Activated T-helper 1 cell treated with anti-CD3 and anti-CD28 coated beads, Interleukin-12 subunit alpha, Interleukin-12 subunit beta, Interleukin-2, Interleukin-4 antibody, amounts not matched to agents 30 ng/mL and 10 ng/mL and 1 ng/mL, durations not matched to agents 14 hours and 24 hours and 36 hours (primary cell): ENCODE measurements at regions of chr6 and their contacts with region 1.

Region 1: DNA sequence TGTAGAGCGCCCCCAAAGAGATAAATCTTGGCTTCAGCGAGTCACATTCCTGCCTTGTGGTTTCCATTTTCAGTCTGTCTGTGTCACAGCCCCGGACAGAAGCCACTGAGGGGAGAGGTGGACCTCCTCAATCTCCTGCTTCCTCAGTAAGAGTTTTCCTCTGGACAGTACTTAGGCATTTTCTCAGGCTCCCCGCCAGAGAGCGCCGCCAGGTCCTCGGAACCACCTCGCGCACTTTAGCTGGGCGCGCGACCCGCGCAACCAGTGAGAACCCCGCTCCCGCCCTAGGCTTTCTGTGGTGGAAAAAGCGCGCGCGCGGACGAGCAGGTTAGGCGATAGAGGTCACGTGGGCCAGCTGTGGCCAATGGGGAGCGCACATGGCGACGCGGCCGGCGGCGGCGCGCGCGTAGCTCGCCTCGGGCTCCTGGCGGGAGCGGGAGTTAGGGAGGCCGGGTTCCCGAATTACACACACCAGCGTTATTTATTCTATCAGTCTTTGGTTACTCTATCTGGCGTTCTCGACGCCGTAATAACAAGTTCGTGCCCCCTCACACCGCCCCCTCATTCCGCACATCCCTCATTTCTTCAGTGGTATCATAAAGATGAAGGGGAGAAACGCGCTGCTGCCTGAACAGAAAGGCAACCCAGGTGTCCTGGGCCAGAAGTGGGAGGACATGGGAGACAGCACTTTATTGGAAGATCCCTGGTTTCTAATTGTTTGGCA is 19.4 kb downstream of the PXT1 start:
- DNase-seq: peak; percentile 97
- H3K4me3 Mint-ChIP-seq: peak overlapping the region; percentile 88
- H3K27ac Mint-ChIP-seq: peak overlapping the region; percentile 84
- H3K4me1 Mint-ChIP-seq: peaks cover 21% of the 10 kb centered on the region
- H3K27me3 Mint-ChIP-seq: peaks cover 11% of the 10 kb centered on the region

Region 2: GRCh38 chr6:35920793-35921732 is 502.2 kb before region 1 on chr6 and contains the start of gene SRPK1:
- intact Hi-C with region 1: loop called (anchors 1 kb)
- DNase-seq: peak; percentile 85
- H3K4me3 Mint-ChIP-seq: peak within 1 kb of the TSS; percentile 96
- H3K27ac Mint-ChIP-seq: peak within 1 kb of the TSS; percentile 93
- H3K4me1 Mint-ChIP-seq: peaks cover 49% of the 10 kb centered on the region
- H3K27me3 Mint-ChIP-seq: no peaks in the 10 kb centered on the region
- total RNA-seq, gene SRPK1: 149 and 182 TPM in 2 replicates

Region 3: GRCh38 chr6:36386495-36387439 is 36.5 kb before region 1 on chr6:
- intact Hi-C with region 1: loop called (anchors 2 kb)
- DNase-seq: no peak
- H3K4me3 Mint-ChIP-seq: peak overlapping the region; percentile 92
- H3K27ac Mint-ChIP-seq: peak overlapping the region; percentile 82
- H3K4me1 Mint-ChIP-seq: peaks cover 44% of the 10 kb centered on the region
- H3K27me3 Mint-ChIP-seq: peaks cover 31% of the 10 kb centered on the region

Region 4: DNA sequence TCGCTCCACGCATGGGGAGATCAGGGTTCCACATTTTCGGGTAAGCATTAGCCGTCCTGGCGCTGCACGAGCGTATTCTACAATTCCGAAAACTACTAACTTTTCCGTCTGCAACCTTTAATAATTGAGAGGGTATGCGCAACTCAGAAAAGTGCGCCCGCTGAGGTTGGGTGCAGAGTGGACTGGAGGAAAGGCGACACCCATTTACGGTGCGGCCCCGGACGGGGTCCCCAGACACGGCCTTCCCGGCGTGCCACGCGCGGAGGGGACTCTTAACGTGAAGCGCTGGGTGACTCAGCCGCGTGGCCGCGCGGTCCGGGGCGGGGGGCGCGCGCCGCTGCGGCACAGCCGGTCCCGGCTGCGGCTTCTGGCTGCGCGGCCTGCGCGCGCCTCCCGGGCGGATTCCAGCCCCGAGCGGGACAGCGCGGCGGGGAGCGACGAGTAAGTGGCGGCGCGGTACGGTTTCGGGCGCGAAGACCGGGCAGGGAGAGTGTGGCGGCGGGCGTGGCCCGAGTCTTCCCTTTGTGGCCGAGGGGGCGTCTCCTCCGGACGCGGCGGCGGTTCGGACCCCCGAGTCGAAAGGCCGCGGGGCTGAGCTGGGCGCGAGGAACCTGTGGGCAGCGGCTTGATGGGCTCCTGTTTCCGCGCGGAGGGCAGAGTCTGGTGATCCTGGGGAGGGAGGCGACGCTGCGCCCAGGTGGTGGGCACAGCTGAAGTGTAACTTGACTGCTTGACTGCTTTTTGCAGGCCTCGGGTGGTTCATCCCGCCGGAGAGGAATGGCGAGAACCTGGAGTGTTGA is 19.6 kb after region 1 on chr6 and contains the starts of genes KCTD20 and PXT1:
- intact Hi-C with region 1: loop called (anchors 1 kb)
- DNase-seq: peak; percentile 86
- H3K4me3 Mint-ChIP-seq: peak within 1 kb of the TSS; percentile 96
- H3K27ac Mint-ChIP-seq: peak within 1 kb of the TSS; percentile 95
- H3K4me1 Mint-ChIP-seq: peaks cover 48% of the 10 kb centered on the region
- H3K27me3 Mint-ChIP-seq: no peaks in the 10 kb centered on the region
- total RNA-seq, gene KCTD20: 62.4 and 62.8 TPM in 2 replicates
- total RNA-seq, gene PXT1: 0.16 and 0.29 TPM in 2 replicates

Region 5: DNA sequence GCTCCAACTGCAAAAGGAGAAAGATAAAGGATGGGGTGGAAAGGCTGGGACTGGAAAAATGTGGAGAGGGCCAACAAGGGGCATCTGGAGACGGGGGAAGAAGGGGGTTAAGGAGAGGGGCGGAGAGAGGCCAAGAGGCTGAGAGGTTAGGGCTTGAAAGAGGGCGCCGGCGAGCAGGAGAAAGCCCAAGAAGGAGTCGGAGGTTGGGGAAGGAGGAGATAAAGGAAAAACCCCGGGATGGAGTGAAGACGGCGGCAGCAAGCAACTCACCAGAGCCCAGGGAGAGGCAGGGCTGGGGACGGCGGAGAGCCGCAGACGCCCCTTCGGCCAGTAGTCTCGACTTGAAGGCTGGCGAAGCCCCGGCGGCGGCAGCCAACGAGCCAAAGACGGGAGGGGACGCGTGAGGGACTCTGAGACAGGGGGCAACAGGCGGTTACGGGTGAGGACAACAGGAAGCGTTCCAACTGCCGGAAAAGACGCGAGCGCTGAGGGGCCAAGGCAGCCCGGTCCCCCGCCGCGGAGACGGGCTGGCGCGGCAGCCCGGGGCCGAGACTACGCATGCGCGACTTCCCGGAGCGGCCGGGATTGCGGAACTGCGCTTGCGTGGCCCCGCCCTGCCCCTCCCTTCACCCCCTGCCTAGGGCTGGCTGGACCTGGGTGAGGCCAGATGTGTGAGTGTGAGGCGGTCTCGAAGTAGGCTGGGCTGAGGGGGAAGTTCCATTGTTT is 123.8 kb after region 1 on chr6 and contains the start of gene STK38:
- intact Hi-C with region 1: loop called (anchors 1 kb)
- DNase-seq: peak; percentile 84
- H3K4me3 Mint-ChIP-seq: peak within 1 kb of the TSS; percentile 95
- H3K27ac Mint-ChIP-seq: peak within 1 kb of the TSS; percentile 92
- H3K4me1 Mint-ChIP-seq: peaks cover 50% of the 10 kb centered on the region
- H3K27me3 Mint-ChIP-seq: peaks cover 2% of the 10 kb centered on the region
- total RNA-seq, gene STK38: 23.5 and 23.6 TPM in 2 replicates

Region 6: GRCh38 chr6:36594029-36594815 is 171.0 kb after region 1 on chr6 and contains the start of gene SRSF3:
- intact Hi-C with region 1: loop called (anchors 1 kb)
- DNase-seq: peak; percentile 96
- H3K4me3 Mint-ChIP-seq: peak within 1 kb of the TSS; percentile 97
- H3K27ac Mint-ChIP-seq: peak within 1 kb of the TSS; percentile 100
- H3K4me1 Mint-ChIP-seq: peaks cover 44% of the 10 kb centered on the region
- H3K27me3 Mint-ChIP-seq: no peaks in the 10 kb centered on the region
- total RNA-seq, gene SRSF3: 525 and 546 TPM in 2 replicates

Region 7: DNA sequence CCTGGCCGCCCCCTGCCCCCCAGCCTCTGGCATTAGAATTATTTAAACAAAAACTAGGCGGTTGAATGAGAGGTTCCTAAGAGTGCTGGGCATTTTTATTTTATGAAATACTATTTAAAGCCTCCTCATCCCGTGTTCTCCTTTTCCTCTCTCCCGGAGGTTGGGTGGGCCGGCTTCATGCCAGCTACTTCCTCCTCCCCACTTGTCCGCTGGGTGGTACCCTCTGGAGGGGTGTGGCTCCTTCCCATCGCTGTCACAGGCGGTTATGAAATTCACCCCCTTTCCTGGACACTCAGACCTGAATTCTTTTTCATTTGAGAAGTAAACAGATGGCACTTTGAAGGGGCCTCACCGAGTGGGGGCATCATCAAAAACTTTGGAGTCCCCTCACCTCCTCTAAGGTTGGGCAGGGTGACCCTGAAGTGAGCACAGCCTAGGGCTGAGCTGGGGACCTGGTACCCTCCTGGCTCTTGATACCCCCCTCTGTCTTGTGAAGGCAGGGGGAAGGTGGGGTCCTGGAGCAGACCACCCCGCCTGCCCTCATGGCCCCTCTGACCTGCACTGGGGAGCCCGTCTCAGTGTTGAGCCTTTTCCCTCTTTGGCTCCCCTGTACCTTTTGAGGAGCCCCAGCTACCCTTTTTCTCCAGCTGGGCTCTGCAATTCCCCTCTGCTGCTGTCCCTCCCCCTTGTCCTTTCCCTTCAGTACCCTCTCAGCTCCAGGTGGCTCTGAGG is 262.8 kb after region 1 on chr6:
- intact Hi-C with region 1: no loop called
- DNase-seq: no peak
- H3K4me3 Mint-ChIP-seq: no peak overlapping the region
- H3K27ac Mint-ChIP-seq: no peak overlapping the region
- H3K4me1 Mint-ChIP-seq: peaks cover 60% of the 10 kb centered on the region
- H3K27me3 Mint-ChIP-seq: no peaks in the 10 kb centered on the region